ENCODE measurements at regions of chr5 and their contacts with region 1.

Region 1: GRCh38 chr5:98773464-98774191 is at the start of gene RGMB:
- DNase-seq: peak; percentile 63 to 93 (median 88)
- ATAC-seq: peak; percentile 92
- H3K4me3 ChIP-seq: peak within 1 kb of the TSS; percentile 88
- H3K4me3 Mint-ChIP-seq: peak within 1 kb of the TSS; percentile 89 to 100 (median 98)
- H3K27ac ChIP-seq: peak within 1 kb of the TSS; percentile 61
- H3K27ac Mint-ChIP-seq: peak within 1 kb of the TSS; percentile 75 to 98 (median 95)
- H3K4me1 ChIP-seq: peaks cover 19 to 28% of the 10 kb centered on the region in 2 donors
- H3K4me1 Mint-ChIP-seq: peaks cover 44 to 72% (median 65%) of the 10 kb centered on the region in 7 donors
- H3K27me3 ChIP-seq: peaks cover 0 to 4% of the 10 kb centered on the region in 2 donors
- H3K27me3 Mint-ChIP-seq: peaks cover 0 to 83% (median 7%) of the 10 kb centered on the region in 5 donors
- total RNA-seq, gene RGMB: 0.41 to 22.4 (median 18.7) TPM

Region 2: DNA sequence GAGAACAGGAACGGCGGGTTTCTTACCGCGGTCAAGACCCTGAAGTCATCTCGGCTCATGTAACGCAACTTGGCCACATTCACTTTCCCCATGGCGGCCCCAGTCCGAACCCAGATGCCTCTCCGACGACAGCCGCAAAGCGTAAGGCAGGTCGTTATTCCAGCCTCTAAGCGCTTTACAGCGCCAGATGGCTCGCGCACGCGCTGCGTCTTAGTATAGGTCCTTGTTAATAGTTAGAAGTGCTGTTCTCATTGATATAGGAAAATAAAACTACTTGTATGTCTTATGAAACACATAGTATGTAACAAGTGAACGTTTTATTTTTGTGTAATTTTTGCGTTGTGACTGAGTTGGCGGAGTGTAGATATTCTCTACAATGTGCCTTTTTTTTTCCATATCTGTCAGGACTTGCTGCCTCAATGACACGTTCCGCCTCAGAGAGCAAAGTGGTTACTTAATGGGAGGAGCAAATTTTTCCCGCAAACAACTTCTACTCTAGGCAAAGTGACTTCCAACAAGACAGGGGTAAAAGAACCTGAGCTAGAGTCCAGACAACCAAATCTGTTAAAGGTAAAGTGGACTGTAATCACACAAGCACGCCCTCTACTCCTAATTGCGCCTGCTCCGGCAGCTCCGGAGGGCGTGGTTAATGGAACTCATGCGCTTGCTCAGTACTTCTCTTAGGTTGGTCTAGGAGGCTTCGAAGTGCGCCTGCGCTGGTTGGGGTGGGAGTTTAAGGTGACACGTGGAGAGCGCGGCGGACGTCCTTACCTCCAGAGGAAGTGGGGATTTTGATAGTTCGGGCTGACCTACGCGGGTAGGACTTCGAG is 1590.3 kb before region 1 on chr5 and contains the start of gene RIOK2:
- CTCF ChIA-PET with region 1: interaction called, 3 read pairs
- POLR2A ChIA-PET with region 1: no interaction called
- intact Hi-C with region 1: loop called (anchors 1 kb)
- DNase-seq: peak; percentile 77 to 93 (median 91)
- ATAC-seq: peak; percentile 96
- H3K4me3 ChIP-seq: peak within 1 kb of the TSS; percentile 82
- H3K4me3 Mint-ChIP-seq: peak within 1 kb of the TSS; percentile 89 to 98 (median 94)
- H3K27ac ChIP-seq: peak within 1 kb of the TSS; percentile 94
- H3K27ac Mint-ChIP-seq: peak within 1 kb of the TSS; percentile 99 to 100 (median 100)
- H3K4me1 ChIP-seq: peaks cover 4 to 14% of the 10 kb centered on the region in 2 donors
- H3K4me1 Mint-ChIP-seq: peaks cover 23 to 54% (median 44%) of the 10 kb centered on the region in 7 donors
- H3K27me3 ChIP-seq: no peaks in the 10 kb centered on the region
- H3K27me3 Mint-ChIP-seq: peaks cover 0 to 3% (median 0%) of the 10 kb centered on the region in 5 donors
- total RNA-seq, gene RIOK2: 18.8 to 36.0 (median 28.5) TPM

Region 3: GRCh38 chr5:97547999-97548738 is 1225.5 kb before region 1 on chr5:
- CTCF ChIA-PET with region 1: interaction called, 3 read pairs
- POLR2A ChIA-PET with region 1: no interaction called
- intact Hi-C with region 1: loop called in 1 of 2 experiments (anchors 5 kb)
- DNase-seq: peak in 1 of 9 donors; percentile 7
- ATAC-seq: peak; percentile 58
- H3K4me3 ChIP-seq: no peak overlapping the region
- H3K4me3 Mint-ChIP-seq: peak overlapping the region in 1 of 10 donors; percentile 5
- H3K27ac ChIP-seq: no peak overlapping the region
- H3K27ac Mint-ChIP-seq: peak overlapping the region in 6 of 9 donors; percentile 3 to 70 (median 42)
- H3K4me1 ChIP-seq: peaks cover 0 to 27% of the 10 kb centered on the region in 2 donors
- H3K4me1 Mint-ChIP-seq: peaks cover 0 to 44% (median 17%) of the 10 kb centered on the region in 7 donors
- H3K27me3 ChIP-seq: no peaks in the 10 kb centered on the region
- H3K27me3 Mint-ChIP-seq: peaks cover 0 to 4% (median 0%) of the 10 kb centered on the region in 5 donors

Region 4: DNA sequence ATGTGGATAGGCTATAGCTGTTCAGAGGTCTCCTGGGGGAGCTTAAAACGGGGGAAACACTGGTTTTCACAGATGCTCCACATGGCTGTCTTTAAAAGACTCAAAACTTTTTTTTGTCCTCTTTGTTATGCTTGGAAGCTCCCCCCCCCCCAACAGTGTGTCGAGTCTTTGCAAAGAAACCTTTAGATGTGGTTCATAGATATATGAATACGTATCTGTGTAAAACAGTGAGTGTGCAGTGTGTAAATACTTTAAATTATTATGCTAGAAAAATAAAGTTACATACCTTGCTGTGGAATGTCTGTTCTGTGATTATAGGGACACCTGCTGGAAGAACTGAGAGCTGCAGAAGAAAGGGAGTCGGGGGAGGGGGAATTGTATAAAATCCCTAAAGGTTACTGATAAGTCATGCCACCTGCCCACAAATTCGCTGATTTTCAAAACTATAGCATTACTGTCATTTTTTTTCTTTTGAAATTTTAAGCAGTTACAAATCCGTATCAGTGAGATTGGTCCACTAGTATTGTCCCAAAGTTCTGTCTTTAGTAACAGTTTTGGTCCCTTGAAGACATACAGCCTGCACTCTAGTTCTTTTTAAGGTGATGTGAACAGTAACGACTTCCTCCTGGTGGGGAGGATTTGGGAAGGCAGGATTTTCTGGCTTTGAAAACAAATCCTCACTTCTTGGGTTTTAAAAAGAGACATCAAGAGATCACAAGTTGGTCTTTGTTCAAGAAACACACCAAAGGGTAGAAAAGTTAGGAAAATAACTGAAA is 22.8 kb after region 1 on chr5:
- CTCF ChIA-PET with region 1: interaction called, 23 read pairs
- POLR2A ChIA-PET with region 1: interaction called, 3 read pairs
- intact Hi-C with region 1: loop called (anchors 1 to 2 kb)
- DNase-seq: peak in 8 of 9 donors; percentile 28 to 62 (median 55)
- ATAC-seq: peak; percentile 73
- H3K4me3 ChIP-seq: no peak overlapping the region
- H3K4me3 Mint-ChIP-seq: no peak overlapping the region
- H3K27ac ChIP-seq: no peak overlapping the region
- H3K27ac Mint-ChIP-seq: peak overlapping the region in 1 of 9 donors; percentile 44
- H3K4me1 ChIP-seq: no peaks in the 10 kb centered on the region
- H3K4me1 Mint-ChIP-seq: peaks cover 0 to 20% (median 4%) of the 10 kb centered on the region in 7 donors
- H3K27me3 ChIP-seq: no peaks in the 10 kb centered on the region
- H3K27me3 Mint-ChIP-seq: peaks cover 0 to 2% (median 0%) of the 10 kb centered on the region in 5 donors

Region 5: GRCh38 chr5:98905857-98906690 is 132.4 kb after region 1 on chr5:
- CTCF ChIA-PET with region 1: no interaction called
- POLR2A ChIA-PET with region 1: no interaction called
- intact Hi-C with region 1: loop called in 1 of 2 experiments (anchors 5 kb)
- DNase-seq: peak in 7 of 9 donors; percentile 32 to 73 (median 64)
- ATAC-seq: peak; percentile 87
- H3K4me3 ChIP-seq: no peak overlapping the region
- H3K4me3 Mint-ChIP-seq: peak overlapping the region in 2 of 10 donors; percentile 2 to 3
- H3K27ac ChIP-seq: peak overlapping the region; percentile 31
- H3K27ac Mint-ChIP-seq: peak overlapping the region in 8 of 9 donors; percentile 1 to 77 (median 34)
- H3K4me1 ChIP-seq: peaks cover 10 to 12% of the 10 kb centered on the region in 2 donors
- H3K4me1 Mint-ChIP-seq: peaks cover 29 to 68% (median 53%) of the 10 kb centered on the region in 7 donors
- H3K27me3 ChIP-seq: no peaks in the 10 kb centered on the region
- H3K27me3 Mint-ChIP-seq: no peaks in the 10 kb centered on the region

Region 6: DNA sequence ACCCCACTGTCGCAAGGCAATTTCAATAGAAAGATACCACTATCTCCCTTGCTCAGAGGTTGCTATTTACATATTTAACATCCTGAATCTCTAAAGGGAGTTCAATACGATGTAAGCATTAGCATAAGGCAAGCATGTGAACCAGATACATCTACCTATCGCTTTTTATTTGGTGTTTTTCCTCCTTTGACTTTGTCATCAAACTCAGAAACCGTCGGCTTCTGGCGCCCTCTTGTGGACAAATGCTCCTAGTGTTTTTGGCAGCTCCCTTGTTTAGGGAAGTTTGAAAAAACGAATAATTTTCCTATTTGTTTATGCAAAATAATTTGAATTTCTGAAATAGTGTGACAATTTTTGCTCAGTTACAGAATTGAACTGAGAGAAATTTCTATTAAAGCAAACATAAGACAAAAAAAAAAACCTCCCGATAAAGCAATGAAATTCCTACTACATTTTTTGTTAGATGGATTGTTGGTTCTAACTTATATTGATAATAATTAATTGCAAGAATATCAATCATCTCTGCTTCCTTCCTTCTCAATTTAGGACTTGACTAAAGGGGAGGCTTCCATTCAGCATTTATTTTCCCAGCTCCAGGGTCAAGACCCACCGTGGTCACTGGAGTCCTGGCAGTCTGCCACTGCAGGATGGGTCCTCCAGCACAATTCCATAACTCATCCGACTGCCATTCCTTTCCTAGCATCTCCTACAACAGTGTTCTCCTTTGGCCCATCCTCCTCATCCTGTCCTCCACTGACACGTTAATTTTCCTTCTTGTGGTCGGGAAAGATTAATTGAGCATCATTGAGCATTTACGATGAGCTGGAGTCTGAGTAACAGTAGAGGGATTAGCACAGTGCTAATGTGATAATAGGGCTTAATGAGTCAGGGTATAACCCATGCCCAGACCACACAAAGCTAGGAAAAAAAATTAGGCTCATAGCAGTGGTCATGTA is 287.0 kb after region 1 on chr5:
- CTCF ChIA-PET with region 1: no interaction called
- POLR2A ChIA-PET with region 1: interaction called, 3 read pairs
- intact Hi-C with region 1: loop called (anchors 1 to 2 kb)
- DNase-seq: peak; percentile 66 to 86 (median 80)
- ATAC-seq: peak; percentile 87
- H3K4me3 ChIP-seq: no peak overlapping the region
- H3K4me3 Mint-ChIP-seq: peak overlapping the region in 5 of 10 donors; percentile 7 to 53 (median 29)
- H3K27ac ChIP-seq: no peak overlapping the region
- H3K27ac Mint-ChIP-seq: no peak overlapping the region
- H3K4me1 ChIP-seq: peaks cover 0 to 4% of the 10 kb centered on the region in 2 donors
- H3K4me1 Mint-ChIP-seq: peaks cover 0 to 18% (median 9%) of the 10 kb centered on the region in 7 donors
- H3K27me3 ChIP-seq: no peaks in the 10 kb centered on the region
- H3K27me3 Mint-ChIP-seq: peaks cover 0 to 20% (median 4%) of the 10 kb centered on the region in 5 donors

Measured in naive thymus-derived CD4-positive, alpha-beta T cell (primary cell).